Breast epithelium (tissue), 4 donors: ENCODE measurements at regions of chr1 and their contacts with region 1.

Region 1: DNA sequence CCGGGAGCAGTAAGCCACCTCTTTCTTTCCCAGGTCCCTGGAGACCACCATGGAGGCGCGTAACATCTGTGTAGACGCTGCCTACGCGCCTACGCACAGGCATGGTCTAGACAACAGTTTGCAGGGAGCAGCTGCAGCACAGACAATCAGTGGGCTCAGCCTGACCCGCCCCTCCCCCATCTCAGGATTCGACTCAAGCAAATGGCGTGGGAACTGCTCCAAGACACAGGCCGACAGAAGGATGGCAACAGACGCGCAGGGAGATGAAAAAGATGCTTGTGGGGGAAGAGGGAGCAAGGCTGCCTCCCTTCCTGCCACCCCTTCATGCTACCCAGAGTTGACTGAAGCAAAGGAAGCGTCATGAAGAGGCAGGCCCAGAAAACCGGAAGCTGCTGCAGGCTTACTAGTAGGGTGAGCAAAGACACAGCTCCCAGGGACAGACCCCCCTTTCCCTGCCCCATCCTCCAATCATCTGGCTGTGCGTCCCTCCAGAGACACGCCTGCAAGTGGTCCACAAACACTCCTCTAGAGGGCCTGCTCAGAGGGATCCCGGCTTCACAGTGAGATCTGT is 19.5 kb downstream of the STK40 start:
- DNase-seq: no peak
- H3K4me3 ChIP-seq: no peak overlapping the region
- H3K27ac ChIP-seq: peak overlapping the region; percentile 36 to 56
- H3K4me1 ChIP-seq: peaks cover 0 to 8% of the 10 kb centered on the region in 2 donors
- H3K27me3 ChIP-seq: no peaks in the 10 kb centered on the region
- CTCF ChIP-seq: no peak
- POLR2A ChIP-seq: no peak

Region 2: DNA sequence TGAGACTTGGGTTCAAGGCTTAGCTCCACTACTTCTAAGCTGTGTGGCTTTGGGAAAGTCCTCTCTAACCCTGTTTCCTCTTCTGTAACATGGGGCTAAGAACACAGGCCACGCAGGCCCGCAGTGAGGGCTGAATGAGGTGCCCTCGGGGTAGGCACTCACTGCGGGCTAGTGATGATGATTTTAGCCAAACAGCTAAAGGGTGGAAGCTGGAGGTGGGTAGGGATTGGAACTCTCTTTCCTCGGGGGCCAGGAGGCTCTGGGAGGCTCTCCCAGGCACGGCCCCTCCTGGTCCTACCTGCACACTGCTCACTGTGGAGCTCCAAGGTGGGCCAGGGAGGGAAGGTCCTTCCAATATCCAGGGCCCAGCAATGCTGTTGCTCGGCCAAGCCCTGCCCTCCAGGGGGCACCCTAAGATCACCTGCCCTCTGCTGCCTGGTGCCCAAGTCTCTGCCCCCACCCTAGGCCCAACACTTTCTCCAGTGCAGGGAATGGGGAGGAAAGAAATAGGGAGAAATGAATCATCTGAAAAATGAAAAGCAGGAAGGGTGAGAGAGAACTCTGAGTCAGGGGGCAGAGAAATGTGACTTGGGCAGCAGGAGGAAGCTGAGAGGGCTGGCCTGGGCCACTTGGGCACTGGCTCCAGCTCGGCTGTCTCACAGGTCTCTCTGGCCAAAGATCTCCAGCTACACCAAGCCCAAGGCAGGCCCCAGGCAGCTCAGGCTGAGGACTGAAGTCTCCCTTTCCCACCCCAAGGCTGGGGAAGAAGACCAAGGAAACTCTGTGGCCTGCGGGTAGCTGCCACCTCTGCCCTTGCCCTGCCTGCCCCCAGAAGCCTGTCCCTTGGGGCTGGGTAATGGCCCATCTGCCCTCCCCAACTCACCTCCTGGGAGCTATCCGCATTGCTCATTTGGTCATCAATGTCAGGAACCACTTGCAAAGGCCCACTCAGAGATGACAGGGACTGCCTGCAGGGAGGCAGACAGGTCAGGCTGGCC is 23.4 kb before region 1 on chr1:
- intact Hi-C with region 1: loop called (anchors 1 kb)
- DNase-seq: no peak
- H3K4me3 ChIP-seq: no peak overlapping the region
- H3K27ac ChIP-seq: peak overlapping the region; percentile 45 to 55
- H3K4me1 ChIP-seq: no peaks in the 10 kb centered on the region
- H3K27me3 ChIP-seq: no peaks in the 10 kb centered on the region
- CTCF ChIP-seq: peak in 2 of 3 donors; percentile 49 to 65
- POLR2A ChIP-seq: no peak

Region 3: GRCh38 chr1:36385410-36386257 is 19.5 kb after region 1 on chr1 and contains the start of gene STK40:
- intact Hi-C with region 1: no loop called
- DNase-seq: peak; percentile 98 to 99
- H3K4me3 ChIP-seq: peak within 1 kb of the TSS; percentile 68 to 92 (median 85)
- H3K27ac ChIP-seq: peak within 1 kb of the TSS; percentile 98 to 99
- H3K4me1 ChIP-seq: peaks cover 2 to 32% of the 10 kb centered on the region in 2 donors
- H3K27me3 ChIP-seq: no peaks in the 10 kb centered on the region
- CTCF ChIP-seq: no peak
- POLR2A ChIP-seq: no peak
- total RNA-seq, gene STK40: 22.5 to 36.0 (median 26.2) TPM